Psoas muscle (tissue), 8 donors: ENCODE measurements at regions of chr16 and their contacts with region 1.

Region 1: DNA sequence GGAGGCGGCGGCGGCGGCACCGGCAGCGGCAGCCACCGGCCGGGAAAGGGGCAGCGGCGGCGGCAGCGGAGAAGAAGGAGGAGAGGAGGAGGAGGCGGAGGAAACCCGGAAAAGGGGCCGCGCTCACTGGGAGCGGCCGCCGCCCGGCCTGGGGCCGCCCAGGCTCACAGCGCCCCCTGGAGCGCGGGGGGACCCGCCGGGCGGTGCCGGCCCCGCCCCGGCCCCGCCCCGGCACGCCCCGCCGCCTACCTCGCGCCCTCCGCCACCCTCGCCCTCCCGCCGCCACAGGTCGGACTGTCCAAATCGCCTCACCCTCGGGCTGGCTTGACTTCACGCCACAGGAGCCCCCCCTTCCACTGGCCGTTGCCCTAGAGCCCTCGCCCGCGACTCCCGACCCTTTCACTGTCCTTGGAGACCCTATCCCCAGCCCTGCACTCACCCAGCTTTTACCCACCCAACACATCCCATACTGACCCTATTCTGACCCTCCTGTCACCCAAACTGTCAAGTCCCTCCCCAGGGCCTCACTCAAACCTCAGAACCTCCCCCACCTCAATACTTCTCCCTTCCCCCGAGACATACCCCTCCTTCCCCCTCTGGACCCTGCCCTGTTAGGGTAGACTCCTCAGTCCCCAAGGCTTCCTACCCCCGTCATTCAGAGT is at the start of gene CSNK2A2:
- DNase-seq: peak; percentile 75 to 88
- ATAC-seq: peak; percentile 89 to 98 (median 97)
- H3K4me3 ChIP-seq: peak within 1 kb of the TSS; percentile 81
- H3K27ac ChIP-seq: peak within 1 kb of the TSS; percentile 32
- H3K4me1 ChIP-seq: peaks cover 14% of the 10 kb centered on the region
- H3K27me3 ChIP-seq: no peaks in the 10 kb centered on the region
- CTCF ChIP-seq: peak; percentile 61
- total RNA-seq, gene CSNK2A2: 40.7 to 47.0 (median 43.6) TPM

Region 2: GRCh38 chr16:58020628-58021139 is 177.5 kb before region 1 on chr16:
- intact Hi-C with region 1: loop called in 1 of 2 experiments (anchors 5 kb)
- DNase-seq: peak; percentile 54 to 74
- ATAC-seq: peak in 2 of 4 donors; percentile 44 to 49
- H3K4me3 ChIP-seq: no peak overlapping the region
- H3K27ac ChIP-seq: no peak overlapping the region
- H3K4me1 ChIP-seq: peaks cover 12% of the 10 kb centered on the region
- H3K27me3 ChIP-seq: no peaks in the 10 kb centered on the region
- CTCF ChIP-seq: peak; percentile 75

Region 3: GRCh38 chr16:58236231-58236690 is 38.1 kb after region 1 on chr16:
- intact Hi-C with region 1: no loop called
- DNase-seq: peak; percentile 65 to 76
- ATAC-seq: peak; percentile 74 to 99 (median 92)
- H3K4me3 ChIP-seq: peak overlapping the region; percentile 62
- H3K27ac ChIP-seq: no peak overlapping the region
- H3K4me1 ChIP-seq: no peaks in the 10 kb centered on the region
- H3K27me3 ChIP-seq: no peaks in the 10 kb centered on the region
- CTCF ChIP-seq: no peak

Region 4: GRCh38 chr16:58249780-58250478 is 51.8 kb after region 1 on chr16:
- intact Hi-C with region 1: loop called in 1 of 2 experiments (anchors 5 kb)
- DNase-seq: peak; percentile 82 to 91
- ATAC-seq: peak; percentile 98 to 100 (median 100)
- H3K4me3 ChIP-seq: peak overlapping the region; percentile 88
- H3K27ac ChIP-seq: peak overlapping the region; percentile 65
- H3K4me1 ChIP-seq: peaks cover 11% of the 10 kb centered on the region
- H3K27me3 ChIP-seq: no peaks in the 10 kb centered on the region
- CTCF ChIP-seq: no peak